ENCODE measurements at regions of chr10 and their contacts with region 1.

Region 1: DNA sequence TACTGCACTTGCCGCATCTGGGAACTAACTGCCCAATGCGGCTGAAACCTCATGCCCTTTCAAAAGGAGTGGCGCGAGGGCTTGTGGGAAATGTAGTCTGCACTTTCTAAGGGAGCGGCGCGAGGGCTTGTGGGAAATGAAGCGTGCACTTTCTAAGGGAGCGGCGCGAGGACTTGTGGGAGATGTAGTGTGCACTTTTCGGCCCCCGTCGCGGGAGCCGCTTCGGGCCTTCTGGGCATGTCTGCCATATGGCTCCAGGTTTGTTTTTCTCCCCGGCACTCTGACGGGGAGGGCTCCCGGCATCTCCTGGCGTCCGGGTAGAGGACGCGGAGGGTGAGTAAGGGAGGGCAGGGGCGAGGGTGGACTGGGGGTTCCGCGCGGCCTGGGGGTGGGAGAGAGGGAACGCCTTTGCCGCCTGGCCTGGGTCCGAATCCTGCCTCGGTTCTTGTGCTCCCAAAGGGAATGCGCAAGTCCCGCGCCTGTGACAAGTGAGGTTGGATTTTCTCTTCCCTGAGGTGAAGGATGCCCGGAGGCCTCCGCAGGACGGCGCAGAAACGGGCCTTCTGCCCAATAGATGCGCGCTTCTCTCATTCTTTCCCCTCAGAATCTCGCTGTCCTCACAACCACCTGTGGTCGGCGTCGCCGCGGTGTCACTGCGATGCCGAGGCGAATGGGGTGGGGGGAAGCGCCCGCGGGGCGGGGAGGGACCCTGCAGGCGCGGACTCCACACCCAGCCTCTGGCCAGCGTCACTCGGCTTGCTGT is at the start of gene ZNF37A:
- DNase-seq: peak; percentile 86 to 97 (median 94)
- ATAC-seq: peak; percentile 99
- H3K4me3 ChIP-seq: peak within 1 kb of the TSS; percentile 46 to 78
- H3K27ac ChIP-seq: peak within 1 kb of the TSS; percentile 75 to 85
- H3K4me1 ChIP-seq: peaks cover 5 to 10% of the 10 kb centered on the region in 2 donors
- H3K27me3 ChIP-seq: no peaks in the 10 kb centered on the region
- CTCF ChIP-seq: no peak
- polyA plus RNA-seq, gene ZNF37A: 16.7 to 24.0 (median 19.4) TPM

Region 2: DNA sequence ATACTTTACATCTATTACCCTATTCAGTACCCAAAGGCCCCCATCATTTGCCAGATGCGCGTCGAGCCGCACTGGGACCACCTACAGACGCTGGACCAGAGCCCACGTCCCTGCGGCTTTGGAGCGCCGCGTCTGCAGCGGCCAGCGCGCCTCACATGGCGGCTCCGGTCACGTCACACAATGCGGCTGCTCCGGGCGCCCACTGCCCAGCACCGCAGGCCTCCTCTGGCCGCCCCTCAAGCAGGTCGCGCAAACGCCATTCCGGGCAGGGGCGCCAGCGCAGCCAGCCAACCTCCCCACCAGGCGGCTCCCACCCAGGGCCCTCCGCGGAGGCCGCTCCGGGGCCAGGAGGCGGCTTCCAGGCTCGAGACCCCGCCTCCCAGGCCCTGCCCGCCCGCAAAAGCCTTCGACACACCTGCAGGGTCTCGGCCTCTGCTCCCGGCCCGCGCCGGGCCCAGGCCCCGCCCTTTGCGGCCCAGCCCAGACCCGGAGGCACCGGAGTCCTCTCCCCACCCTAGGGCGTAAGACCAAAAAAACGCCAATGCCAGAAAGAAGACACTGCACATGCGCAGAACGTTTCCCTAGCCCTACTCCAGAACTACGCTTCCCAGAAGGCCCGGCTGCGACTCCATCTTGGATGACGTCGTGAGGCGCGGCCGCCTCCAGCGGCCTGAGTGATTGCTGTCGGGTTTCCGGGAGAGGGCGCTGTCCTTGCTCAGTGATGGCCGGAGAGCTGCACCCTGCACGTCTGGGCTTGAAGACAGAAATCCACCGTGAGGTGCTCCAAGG is 118.1 kb before region 1 on chr10 and contains the start of gene ZNF25:
- intact Hi-C with region 1: loop called in 1 of 2 experiments (anchors 10 kb)
- DNase-seq: peak; percentile 97 to 99 (median 98)
- ATAC-seq: peak; percentile 98
- H3K4me3 ChIP-seq: peak within 1 kb of the TSS; percentile 63 to 69
- H3K27ac ChIP-seq: peak within 1 kb of the TSS; percentile 94 to 98
- H3K4me1 ChIP-seq: peaks cover 0 to 17% of the 10 kb centered on the region in 2 donors
- H3K27me3 ChIP-seq: no peaks in the 10 kb centered on the region
- CTCF ChIP-seq: peak; percentile 83 to 96
- polyA plus RNA-seq, gene ZNF25: 14.5 to 19.4 (median 16.4) TPM

Measured in left lung (tissue), 14 donors.